CD8-positive, alpha-beta T cell (primary cell): ENCODE measurements at regions of chr9 and their contacts with region 1.

Region 1: GRCh38 chr9:71819115-71819739 is 50.9 kb upstream of the CEMIP2 start:
- DNase-seq: peak in 8 of 9 experiments; percentile 32 to 71 (median 60)
- ATAC-seq: no peak
- H3K4me3 ChIP-seq: no peak overlapping the region
- H3K4me3 Mint-ChIP-seq: no peak overlapping the region
- H3K27ac ChIP-seq: no peak overlapping the region
- H3K27ac Mint-ChIP-seq: no peak overlapping the region
- H3K4me1 ChIP-seq: peaks cover 12% of the 10 kb centered on the region
- H3K4me1 Mint-ChIP-seq: peaks cover 20% of the 10 kb centered on the region
- H3K27me3 ChIP-seq: no peaks in the 10 kb centered on the region
- H3K27me3 Mint-ChIP-seq: no peaks in the 10 kb centered on the region
- CTCF ChIP-seq: peak; percentile 88

Region 2: GRCh38 chr9:71136696-71137095 is 682.5 kb before region 1 on chr9:
- CTCF ChIA-PET with region 1: no interaction called
- POLR2A ChIA-PET with region 1: no interaction called
- intact Hi-C with region 1: no loop called
- DNase-seq: no peak
- ATAC-seq: no peak
- H3K4me3 ChIP-seq: no peak overlapping the region
- H3K4me3 Mint-ChIP-seq: no peak overlapping the region
- H3K27ac ChIP-seq: no peak overlapping the region
- H3K27ac Mint-ChIP-seq: no peak overlapping the region
- H3K4me1 ChIP-seq: no peaks in the 10 kb centered on the region
- H3K4me1 Mint-ChIP-seq: no peaks in the 10 kb centered on the region
- H3K27me3 ChIP-seq: no peaks in the 10 kb centered on the region
- H3K27me3 Mint-ChIP-seq: no peaks in the 10 kb centered on the region
- CTCF ChIP-seq: no peak

Region 3: GRCh38 chr9:71285191-71285656 is 534.0 kb before region 1 on chr9:
- CTCF ChIA-PET with region 1: interaction called, 7 read pairs
- POLR2A ChIA-PET with region 1: no interaction called
- intact Hi-C with region 1: loop called in 1 of 2 experiments (anchors 5 kb)
- DNase-seq: peak in 6 of 9 experiments; percentile 3 to 54 (median 27)
- ATAC-seq: peak; percentile 48
- H3K4me3 ChIP-seq: no peak overlapping the region
- H3K4me3 Mint-ChIP-seq: no peak overlapping the region
- H3K27ac ChIP-seq: no peak overlapping the region
- H3K27ac Mint-ChIP-seq: no peak overlapping the region
- H3K4me1 ChIP-seq: no peaks in the 10 kb centered on the region
- H3K4me1 Mint-ChIP-seq: no peaks in the 10 kb centered on the region
- H3K27me3 ChIP-seq: no peaks in the 10 kb centered on the region
- H3K27me3 Mint-ChIP-seq: peaks cover 11% of the 10 kb centered on the region
- CTCF ChIP-seq: peak; percentile 88

Region 4: GRCh38 chr9:71628247-71628646 is 191.0 kb before region 1 on chr9:
- CTCF ChIA-PET with region 1: interaction called, 5 read pairs
- POLR2A ChIA-PET with region 1: no interaction called
- intact Hi-C with region 1: loop called in 1 of 2 experiments (anchors 1 kb)
- DNase-seq: peak in 2 of 9 experiments; percentile 34 to 48
- ATAC-seq: no peak
- H3K4me3 ChIP-seq: no peak overlapping the region
- H3K4me3 Mint-ChIP-seq: no peak overlapping the region
- H3K27ac ChIP-seq: no peak overlapping the region
- H3K27ac Mint-ChIP-seq: no peak overlapping the region
- H3K4me1 ChIP-seq: no peaks in the 10 kb centered on the region
- H3K4me1 Mint-ChIP-seq: no peaks in the 10 kb centered on the region
- H3K27me3 ChIP-seq: no peaks in the 10 kb centered on the region
- H3K27me3 Mint-ChIP-seq: no peaks in the 10 kb centered on the region
- CTCF ChIP-seq: peak; percentile 24

Region 5: DNA sequence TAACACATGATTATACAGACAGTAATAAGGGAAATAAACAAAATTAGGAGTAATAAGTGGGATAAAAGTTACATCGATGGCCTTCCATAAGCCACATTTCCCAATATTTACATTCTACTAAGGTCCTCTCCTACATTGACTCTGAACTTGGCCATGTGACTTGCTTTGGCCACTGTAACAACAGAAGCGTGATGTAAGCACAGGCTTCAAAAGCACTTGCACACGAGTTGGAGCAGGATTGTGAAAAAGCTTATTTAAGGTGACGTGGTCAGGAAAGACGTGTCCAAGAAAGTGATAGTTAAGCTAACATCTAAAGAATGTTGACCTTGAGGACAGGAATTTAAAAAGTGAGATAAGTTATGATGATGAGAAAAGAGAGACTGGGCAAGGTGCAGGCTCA is 41.1 kb before region 1 on chr9:
- CTCF ChIA-PET with region 1: interaction called, 49 read pairs
- POLR2A ChIA-PET with region 1: interaction called, 6 read pairs
- intact Hi-C with region 1: loop called (anchors 1 kb)
- DNase-seq: no peak
- ATAC-seq: no peak
- H3K4me3 ChIP-seq: no peak overlapping the region
- H3K4me3 Mint-ChIP-seq: no peak overlapping the region
- H3K27ac ChIP-seq: no peak overlapping the region
- H3K27ac Mint-ChIP-seq: no peak overlapping the region
- H3K4me1 ChIP-seq: peaks cover 31% of the 10 kb centered on the region
- H3K4me1 Mint-ChIP-seq: peaks cover 40% of the 10 kb centered on the region
- H3K27me3 ChIP-seq: no peaks in the 10 kb centered on the region
- H3K27me3 Mint-ChIP-seq: no peaks in the 10 kb centered on the region
- CTCF ChIP-seq: no peak

Region 6: GRCh38 chr9:71795097-71795813 is 24.0 kb before region 1 on chr9:
- CTCF ChIA-PET with region 1: interaction called, 149 read pairs
- POLR2A ChIA-PET with region 1: interaction called, 3 read pairs
- intact Hi-C with region 1: no loop called
- DNase-seq: peak in 3 of 9 experiments; percentile 27 to 83 (median 64)
- ATAC-seq: peak; percentile 86
- H3K4me3 ChIP-seq: peak overlapping the region in 1 of 2 experiments; percentile 17
- H3K4me3 Mint-ChIP-seq: peak overlapping the region; percentile 53
- H3K27ac ChIP-seq: peak overlapping the region; percentile 52 to 82
- H3K27ac Mint-ChIP-seq: peak overlapping the region; percentile 96
- H3K4me1 ChIP-seq: peaks cover 58% of the 10 kb centered on the region
- H3K4me1 Mint-ChIP-seq: peaks cover 70% of the 10 kb centered on the region
- H3K27me3 ChIP-seq: no peaks in the 10 kb centered on the region
- H3K27me3 Mint-ChIP-seq: no peaks in the 10 kb centered on the region
- CTCF ChIP-seq: no peak

Region 7: GRCh38 chr9:71830929-71831328 is 11.7 kb after region 1 on chr9:
- CTCF ChIA-PET with region 1: interaction called, 27 read pairs
- POLR2A ChIA-PET with region 1: no interaction called
- intact Hi-C with region 1: no loop called
- DNase-seq: no peak
- ATAC-seq: no peak
- H3K4me3 ChIP-seq: no peak overlapping the region
- H3K4me3 Mint-ChIP-seq: no peak overlapping the region
- H3K27ac ChIP-seq: no peak overlapping the region
- H3K27ac Mint-ChIP-seq: no peak overlapping the region
- H3K4me1 ChIP-seq: no peaks in the 10 kb centered on the region
- H3K4me1 Mint-ChIP-seq: no peaks in the 10 kb centered on the region
- H3K27me3 ChIP-seq: no peaks in the 10 kb centered on the region
- H3K27me3 Mint-ChIP-seq: no peaks in the 10 kb centered on the region
- CTCF ChIP-seq: no peak